Tibial artery (tissue), 4 donors: ENCODE measurements at regions of chr3 and their contacts with region 1.

Region 1: GRCh38 chr3:39189959-39190269 is 2.5 kb downstream of the XIRP1 start:
- DNase-seq: peak; percentile 47 to 74
- H3K4me3 ChIP-seq: no peak overlapping the region
- H3K27ac ChIP-seq: no peak overlapping the region
- H3K4me1 ChIP-seq: peaks cover 0 to 14% (median 0%) of the 10 kb centered on the region in 4 donors
- H3K27me3 ChIP-seq: no peaks in the 10 kb centered on the region
- CTCF ChIP-seq: peak; percentile 68 to 78

Region 2: DNA sequence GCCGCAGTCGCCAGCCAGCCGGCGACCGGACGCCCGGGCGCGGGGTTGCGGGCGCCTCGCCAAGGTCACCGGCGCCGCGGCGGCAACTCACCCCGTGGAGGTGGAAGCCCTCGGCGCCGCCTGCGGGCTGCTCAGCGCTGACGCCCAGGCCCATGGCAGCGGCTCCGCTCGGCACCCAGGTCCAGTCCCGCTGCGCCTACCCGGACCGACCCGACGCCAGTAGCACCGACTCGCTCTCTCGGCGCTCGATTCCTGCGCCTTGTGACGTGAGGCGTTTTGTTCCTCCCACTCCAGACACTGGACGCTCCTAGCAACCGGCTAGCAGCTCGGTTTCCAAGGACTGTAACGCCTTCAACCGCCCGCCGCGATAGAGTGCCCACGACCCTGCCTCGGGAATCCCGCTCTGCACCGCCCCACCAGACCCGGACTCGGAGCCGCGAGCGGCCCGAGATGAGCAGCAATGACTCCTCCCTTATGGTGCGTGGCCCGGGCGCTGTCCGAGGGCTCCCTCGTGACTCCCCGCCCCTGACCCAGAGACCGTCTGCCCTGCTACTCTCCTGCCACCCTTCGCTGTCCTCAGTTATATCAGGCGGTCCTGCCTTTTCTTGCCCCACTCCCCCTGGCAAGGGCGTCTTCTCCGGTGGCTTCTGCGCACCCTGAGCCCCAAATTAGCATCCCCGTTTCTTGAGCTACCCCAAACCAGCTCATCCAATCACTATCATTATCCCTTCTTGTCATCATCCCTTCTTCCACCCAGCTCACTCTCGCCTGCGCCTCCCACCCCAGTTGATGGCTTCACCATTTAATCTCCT is 82.3 kb before region 1 on chr3 and contains the starts of genes GORASP1 and TTC21A:
- intact Hi-C with region 1: loop called (anchors 5 kb)
- DNase-seq: peak; percentile 88 to 94
- H3K4me3 ChIP-seq: peak within 1 kb of the TSS; percentile 79 to 82
- H3K27ac ChIP-seq: peak within 1 kb of the TSS; percentile 97 to 98
- H3K4me1 ChIP-seq: peaks cover 0 to 51% (median 41%) of the 10 kb centered on the region in 4 donors
- H3K27me3 ChIP-seq: no peaks in the 10 kb centered on the region
- CTCF ChIP-seq: peak in 1 of 2 experiments; percentile 15

Region 3: GRCh38 chr3:39126532-39127071 is 63.3 kb before region 1 on chr3:
- intact Hi-C with region 1: loop called (anchors 5 kb)
- DNase-seq: no peak
- H3K4me3 ChIP-seq: no peak overlapping the region
- H3K27ac ChIP-seq: no peak overlapping the region
- H3K4me1 ChIP-seq: peaks cover 0 to 17% (median 13%) of the 10 kb centered on the region in 4 donors
- H3K27me3 ChIP-seq: no peaks in the 10 kb centered on the region
- CTCF ChIP-seq: peak; percentile 59 to 72

Region 4: GRCh38 chr3:39288300-39288808 is 98.4 kb after region 1 on chr3:
- intact Hi-C with region 1: loop called (anchors 5 kb)
- DNase-seq: peak; percentile 71 to 79
- H3K4me3 ChIP-seq: no peak overlapping the region
- H3K27ac ChIP-seq: no peak overlapping the region
- H3K4me1 ChIP-seq: no peaks in the 10 kb centered on the region
- H3K27me3 ChIP-seq: no peaks in the 10 kb centered on the region
- CTCF ChIP-seq: peak; percentile 84 to 90